Activated T-helper 1 cell treated with anti-CD3 and anti-CD28 coated beads, Interleukin-12 subunit alpha, Interleukin-12 subunit beta, Interleukin-2, Interleukin-4 antibody, amounts not matched to agents 30 ng/mL and 10 ng/mL and 1 ng/mL, durations not matched to agents 14 hours and 24 hours and 36 hours (primary cell): ENCODE measurements at regions of chr21 and their contacts with region 1.

Region 1: GRCh38 chr21:33976082-33977016 is 60.7 kb upstream of the ATP5PO start:
- DNase-seq: peak; percentile 48
- H3K4me3 Mint-ChIP-seq: peak overlapping the region; percentile 75
- H3K27ac Mint-ChIP-seq: peak overlapping the region; percentile 100
- H3K4me1 Mint-ChIP-seq: peaks cover 75% of the 10 kb centered on the region
- H3K27me3 Mint-ChIP-seq: no peaks in the 10 kb centered on the region

Region 2: GRCh38 chr21:33924079-33924765 is 52.1 kb before region 1 on chr21:
- intact Hi-C with region 1: loop called (anchors 2 kb)
- DNase-seq: peak; percentile 79
- H3K4me3 Mint-ChIP-seq: no peak overlapping the region
- H3K27ac Mint-ChIP-seq: no peak overlapping the region
- H3K4me1 Mint-ChIP-seq: peaks cover 27% of the 10 kb centered on the region
- H3K27me3 Mint-ChIP-seq: peaks cover 3% of the 10 kb centered on the region

Region 3: DNA sequence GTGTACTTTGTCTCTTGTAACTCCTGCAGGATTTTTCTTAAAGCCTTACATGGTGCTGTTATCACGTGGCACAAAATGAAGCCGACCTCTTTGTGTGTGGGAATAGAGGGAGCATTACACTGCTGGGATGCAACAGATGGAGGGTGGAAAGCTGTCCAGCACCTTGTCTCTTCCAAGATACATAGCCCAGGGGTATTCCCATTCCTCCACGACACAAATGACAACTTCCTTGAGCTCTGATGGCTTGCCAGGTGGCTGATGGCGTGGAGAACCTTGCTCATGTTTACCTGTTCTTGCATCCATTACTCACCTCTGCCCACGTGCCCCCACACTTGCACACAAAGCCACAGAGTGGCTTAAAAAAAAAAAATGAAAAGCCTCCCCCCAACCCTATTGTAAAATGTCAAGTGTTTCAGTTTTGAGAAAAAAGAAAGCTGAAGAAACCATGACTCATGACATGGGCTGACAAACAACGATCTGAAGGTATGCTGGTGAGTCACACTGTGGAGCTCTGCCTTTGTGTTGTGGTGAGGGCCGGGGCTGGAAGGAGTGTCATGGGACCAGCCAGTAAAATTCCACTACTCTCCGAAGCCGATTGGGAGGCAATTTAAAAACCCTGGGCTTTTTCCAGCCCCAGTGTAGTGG is 28.8 kb before region 1 on chr21:
- intact Hi-C with region 1: loop called (anchors 1 kb)
- DNase-seq: peak; percentile 85
- H3K4me3 Mint-ChIP-seq: peak overlapping the region; percentile 65
- H3K27ac Mint-ChIP-seq: peak overlapping the region; percentile 97
- H3K4me1 Mint-ChIP-seq: peaks cover 77% of the 10 kb centered on the region
- H3K27me3 Mint-ChIP-seq: peaks cover 4% of the 10 kb centered on the region

Region 4: GRCh38 chr21:34020005-34020847 is 43.9 kb after region 1 on chr21:
- intact Hi-C with region 1: loop called (anchors 1 kb)
- DNase-seq: no peak
- H3K4me3 Mint-ChIP-seq: peak overlapping the region; percentile 38
- H3K27ac Mint-ChIP-seq: peak overlapping the region; percentile 59
- H3K4me1 Mint-ChIP-seq: peaks cover 26% of the 10 kb centered on the region
- H3K27me3 Mint-ChIP-seq: no peaks in the 10 kb centered on the region

Region 5: GRCh38 chr21:34073032-34073869 is 96.9 kb after region 1 on chr21 and contains the starts of genes MRPS6 and SLC5A3:
- intact Hi-C with region 1: loop called (anchors 1 kb)
- DNase-seq: peak; percentile 67
- H3K4me3 Mint-ChIP-seq: peak within 1 kb of the TSS; percentile 96
- H3K27ac Mint-ChIP-seq: peak within 1 kb of the TSS; percentile 90
- H3K4me1 Mint-ChIP-seq: peaks cover 44% of the 10 kb centered on the region
- H3K27me3 Mint-ChIP-seq: peaks cover 4% of the 10 kb centered on the region
- total RNA-seq, gene MRPS6: 137 and 139 TPM in 2 replicates
- total RNA-seq, gene SLC5A3: 45.4 and 48.0 TPM in 2 replicates

Region 6: GRCh38 chr21:34190576-34191321 is 214.4 kb after region 1 on chr21:
- intact Hi-C with region 1: loop called (anchors 2 kb)
- DNase-seq: no peak
- H3K4me3 Mint-ChIP-seq: peak overlapping the region; percentile 66
- H3K27ac Mint-ChIP-seq: peak overlapping the region; percentile 92
- H3K4me1 Mint-ChIP-seq: peaks cover 53% of the 10 kb centered on the region
- H3K27me3 Mint-ChIP-seq: no peaks in the 10 kb centered on the region